ENCODE measurements at regions of chr22 and their contacts with region 1.

Region 1: GRCh38 chr22:35231585-35232084 is 25.7 kb upstream of the HMGXB4 start:
- DNase-seq: peak; percentile 88

Region 2: DNA sequence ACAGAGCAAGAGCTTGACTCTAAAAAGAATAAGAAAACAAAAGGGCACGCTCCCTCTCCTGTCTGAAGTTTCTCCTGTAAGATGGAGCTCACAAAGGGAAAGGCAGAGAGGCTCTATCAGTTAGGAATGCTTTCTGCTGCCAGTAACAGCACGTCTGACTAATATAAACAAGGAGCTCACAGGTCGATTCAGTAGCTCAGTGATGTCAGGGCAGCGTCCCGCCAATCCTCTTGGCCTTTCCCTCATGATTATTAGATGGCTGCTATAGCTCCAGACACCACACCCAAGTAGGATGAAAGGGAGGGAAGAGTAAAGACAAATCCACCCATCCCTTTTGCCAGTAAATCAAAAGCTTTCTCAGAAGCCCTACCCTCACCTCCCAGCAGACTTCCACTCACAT is 25.7 kb before region 1 on chr22:
- CTCF ChIA-PET with region 1: interaction called, 11 read pairs
- POLR2A ChIA-PET with region 1: interaction called, 3 read pairs
- DNase-seq: no peak

Region 3: GRCh38 chr22:35292786-35293185 is 61.2 kb after region 1 on chr22:
- CTCF ChIA-PET with region 1: no interaction called
- POLR2A ChIA-PET with region 1: no interaction called
- DNase-seq: no peak

Region 4: GRCh38 chr22:35437038-35437437 is 205.4 kb after region 1 on chr22:
- CTCF ChIA-PET with region 1: no interaction called
- POLR2A ChIA-PET with region 1: no interaction called
- DNase-seq: peak; percentile 66

Measured in HEK293T (cell line).